ENCODE measurements at regions of chr16 and their contacts with region 1.

Region 1: DNA sequence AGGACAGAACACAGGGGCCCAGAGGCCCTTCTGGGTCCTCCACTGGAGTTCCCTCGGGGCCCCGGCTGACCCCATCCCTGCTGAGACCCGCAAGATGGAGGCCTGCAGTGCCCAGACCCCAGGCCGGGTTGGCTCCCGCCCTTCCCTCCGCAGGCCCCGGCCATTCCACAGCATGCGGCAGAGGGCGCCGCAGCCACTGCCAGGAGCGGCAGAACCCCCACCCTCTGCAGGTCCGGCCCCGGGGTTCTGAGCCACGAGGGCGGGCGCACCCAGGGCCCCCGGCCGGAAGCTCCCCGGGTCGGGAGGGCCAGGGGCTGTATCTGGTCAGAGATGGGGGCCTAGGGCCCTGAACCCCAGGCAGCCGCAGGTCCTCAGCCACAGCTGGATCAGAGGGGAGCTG is 2.4 kb upstream of the PERCC1 start:
- DNase-seq: no peak
- H3K4me3 ChIP-seq: no peak overlapping the region
- H3K4me3 Mint-ChIP-seq: no peak overlapping the region
- H3K27ac Mint-ChIP-seq: no peak overlapping the region
- H3K4me1 ChIP-seq: peaks cover 18% of the 10 kb centered on the region
- H3K4me1 Mint-ChIP-seq: no peaks in the 10 kb centered on the region
- H3K27me3 ChIP-seq: no peaks in the 10 kb centered on the region
- H3K27me3 Mint-ChIP-seq: no peaks in the 10 kb centered on the region
- CTCF ChIP-seq: no peak

Region 2: DNA sequence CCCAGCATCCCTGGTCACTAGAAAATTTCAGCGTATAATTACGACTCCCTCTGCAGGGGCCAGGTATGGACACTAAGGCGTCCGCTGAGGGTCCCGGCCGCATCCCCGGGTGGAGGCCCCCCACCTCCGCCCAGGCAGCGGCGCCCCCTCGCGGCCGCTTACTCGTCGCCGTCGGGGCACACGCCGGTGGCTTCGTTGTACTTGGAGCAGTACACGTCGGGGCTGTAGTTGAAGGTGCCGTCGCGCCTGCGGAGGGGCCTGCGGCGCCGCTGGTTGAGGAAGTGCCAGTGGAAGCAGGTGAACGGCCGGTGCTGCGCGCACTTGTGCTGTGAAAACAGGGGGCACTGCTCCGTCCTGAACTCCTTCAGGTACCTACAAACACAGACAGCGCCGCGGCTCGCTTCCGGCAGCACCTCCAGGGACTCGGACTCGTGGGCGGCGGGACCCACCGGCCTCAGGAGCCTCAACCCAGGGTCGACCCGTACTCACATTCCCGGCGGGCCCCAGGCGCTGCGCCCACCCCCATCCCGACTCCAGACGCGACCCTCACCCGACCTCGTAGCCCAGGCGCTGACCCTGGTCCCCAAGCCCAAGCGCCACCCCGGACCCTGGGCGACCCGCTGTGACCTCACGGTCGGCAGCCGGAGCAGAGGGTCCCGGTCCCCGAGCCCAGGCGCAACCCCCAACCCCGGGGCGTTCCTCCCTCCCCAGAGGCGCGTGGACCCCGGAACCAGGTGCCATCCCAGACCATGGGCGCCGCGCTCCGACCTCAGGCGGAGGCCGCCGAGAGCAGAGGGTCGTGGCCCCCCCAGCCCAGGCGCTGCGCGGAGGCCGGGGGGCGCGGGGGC is 14.6 kb before region 1 on chr16:
- CTCF ChIA-PET with region 1: no interaction called
- POLR2A ChIA-PET with region 1: interaction called, 16 read pairs
- intact Hi-C with region 1: loop called (anchors 1 kb)
- DNase-seq: peak; percentile 59 to 74
- H3K4me3 ChIP-seq: peak overlapping the region; percentile 75
- H3K4me3 Mint-ChIP-seq: peak overlapping the region; percentile 68
- H3K27ac Mint-ChIP-seq: peak overlapping the region; percentile 57
- H3K4me1 ChIP-seq: peaks cover 21% of the 10 kb centered on the region
- H3K4me1 Mint-ChIP-seq: no peaks in the 10 kb centered on the region
- H3K27me3 ChIP-seq: no peaks in the 10 kb centered on the region
- H3K27me3 Mint-ChIP-seq: no peaks in the 10 kb centered on the region
- CTCF ChIP-seq: peak; percentile 57 to 58

Region 3: GRCh38 chr16:1474796-1475551 is 46.5 kb after region 1 on chr16 and contains the start of gene CLCN7:
- CTCF ChIA-PET with region 1: no interaction called
- POLR2A ChIA-PET with region 1: no interaction called
- intact Hi-C with region 1: loop called (anchors 10 kb)
- DNase-seq: peak; percentile 85 to 91
- H3K4me3 ChIP-seq: peak within 1 kb of the TSS; percentile 85
- H3K4me3 Mint-ChIP-seq: peak within 1 kb of the TSS; percentile 73
- H3K27ac Mint-ChIP-seq: peak within 1 kb of the TSS; percentile 72
- H3K4me1 ChIP-seq: peaks cover 4% of the 10 kb centered on the region; the same call in 1 of the 2 replicates
- H3K4me1 Mint-ChIP-seq: no peaks in the 10 kb centered on the region
- H3K27me3 ChIP-seq: no peaks in the 10 kb centered on the region
- H3K27me3 Mint-ChIP-seq: no peaks in the 10 kb centered on the region
- CTCF ChIP-seq: no peak
- total RNA-seq, gene CLCN7: 119 and 127 TPM in 2 replicates

Measured in Caco-2 (cell line).